ENCODE measurements at regions of chr9 and their contacts with region 1.

Region 1: GRCh38 chr9:131334629-131335367 is 45.3 kb downstream of the PLPP7 start:
- DNase-seq: no peak
- H3K4me3 ChIP-seq: no peak overlapping the region
- H3K27ac ChIP-seq: no peak overlapping the region
- H3K4me1 ChIP-seq: peaks cover 0 to 14% (median 8%) of the 10 kb centered on the region in 4 experiments
- H3K27me3 ChIP-seq: no peaks in the 10 kb centered on the region
- CTCF ChIP-seq: no peak
- EP300 ChIP-seq: no peak
- POLR2A ChIP-seq: no peak
- RAD21 ChIP-seq: no peak

Region 2: DNA sequence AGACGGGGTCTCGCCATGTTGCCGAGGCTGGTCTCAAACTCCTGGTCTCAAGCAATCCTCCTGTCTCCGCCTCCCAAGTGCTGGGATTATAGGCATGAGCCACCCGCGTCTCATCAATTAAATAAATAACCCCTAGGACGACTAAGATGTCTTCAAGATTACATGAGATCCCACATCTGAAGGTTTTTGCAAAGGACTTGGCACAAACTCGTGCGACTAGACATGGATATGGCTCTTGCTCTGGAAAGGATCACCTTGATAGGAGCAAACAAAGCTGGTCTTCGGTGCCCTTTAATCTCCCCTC is 210.0 kb before region 1 on chr9:
- CTCF ChIA-PET with region 1: no interaction called
- POLR2A ChIA-PET with region 1: no interaction called
- DNase-seq: no peak
- H3K4me3 ChIP-seq: peak overlapping the region; percentile 93 to 99 (median 96)
- H3K27ac ChIP-seq: peak overlapping the region; percentile 90
- H3K4me1 ChIP-seq: peaks cover 0 to 3% (median 0%) of the 10 kb centered on the region in 4 experiments; a peak in 1 of 7 replicates
- H3K27me3 ChIP-seq: no peaks in the 10 kb centered on the region
- CTCF ChIP-seq: no peak
- EP300 ChIP-seq: no peak
- POLR2A ChIP-seq: no peak
- RAD21 ChIP-seq: no peak

Region 3: DNA sequence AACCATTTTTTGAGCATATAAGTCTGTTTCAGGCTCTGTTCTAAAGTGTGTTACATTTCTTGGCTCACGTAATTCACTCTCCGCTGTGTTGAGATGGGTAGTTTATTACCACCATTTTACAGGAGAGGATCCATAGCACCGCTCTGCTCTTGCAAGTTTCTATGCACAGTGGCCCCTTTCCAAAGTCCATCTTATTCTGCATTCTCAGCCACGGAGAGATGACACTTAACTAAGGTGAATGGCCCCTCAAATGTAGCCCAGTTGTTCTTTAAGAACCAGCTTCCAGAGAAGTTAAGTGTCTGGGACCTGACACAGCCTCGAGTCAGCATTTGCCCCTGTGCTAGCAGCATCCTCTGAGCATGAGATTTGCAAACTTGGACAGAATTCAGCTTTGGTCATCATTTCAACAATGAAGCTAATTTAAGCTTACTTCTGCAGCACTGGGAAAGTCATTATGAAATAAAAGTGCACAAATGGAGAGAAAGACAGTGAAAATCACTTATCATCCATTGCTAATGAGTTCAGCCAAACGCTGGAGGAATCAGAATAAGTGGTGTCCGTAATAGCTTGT is 120.4 kb before region 1 on chr9:
- CTCF ChIA-PET with region 1: interaction called, 14 read pairs
- POLR2A ChIA-PET with region 1: interaction called, 3 read pairs
- DNase-seq: no peak
- H3K4me3 ChIP-seq: no peak overlapping the region
- H3K27ac ChIP-seq: no peak overlapping the region
- H3K4me1 ChIP-seq: peaks cover 0 to 2% (median 0%) of the 10 kb centered on the region in 4 experiments; a peak in 1 of 7 replicates
- H3K27me3 ChIP-seq: no peaks in the 10 kb centered on the region
- CTCF ChIP-seq: no peak
- EP300 ChIP-seq: no peak
- POLR2A ChIP-seq: no peak
- RAD21 ChIP-seq: no peak

Region 4: DNA sequence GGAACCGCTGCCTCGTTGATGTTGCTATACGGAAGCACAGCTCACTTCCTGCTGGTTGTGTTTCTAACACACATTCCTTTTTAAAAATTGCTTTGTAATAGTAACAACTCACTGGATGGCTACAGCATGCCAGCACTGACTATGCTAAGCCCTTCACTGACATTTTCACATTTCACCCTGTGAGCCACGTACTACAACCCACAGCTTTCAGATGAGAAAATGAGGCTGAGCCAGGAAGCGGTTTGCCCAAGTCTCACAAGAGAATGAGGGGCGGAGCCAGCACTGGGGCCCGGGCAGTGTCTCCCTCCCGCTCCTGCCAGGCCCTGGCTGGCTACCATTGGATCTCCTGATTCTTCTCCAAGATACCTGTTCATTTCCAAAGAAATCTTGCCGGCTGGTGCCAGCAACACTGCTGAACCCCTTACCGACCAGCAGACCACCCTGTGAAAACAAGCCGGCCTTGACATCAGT is 96.8 kb before region 1 on chr9:
- CTCF ChIA-PET with region 1: interaction called, 17 read pairs
- POLR2A ChIA-PET with region 1: no interaction called
- DNase-seq: peak in 1 of 2 experiments; percentile 79
- H3K4me3 ChIP-seq: no peak overlapping the region
- H3K27ac ChIP-seq: no peak overlapping the region
- H3K4me1 ChIP-seq: peaks cover 0 to 20% (median 16%) of the 10 kb centered on the region in 4 experiments; a peak in 6 of 7 replicates
- H3K27me3 ChIP-seq: no peaks in the 10 kb centered on the region
- CTCF ChIP-seq: no peak
- EP300 ChIP-seq: no peak
- POLR2A ChIP-seq: no peak
- RAD21 ChIP-seq: no peak

Region 5: GRCh38 chr9:131276094-131276888 is 58.5 kb before region 1 on chr9 and contains the start of gene FAM78A:
- CTCF ChIA-PET with region 1: interaction called, 10 read pairs
- POLR2A ChIA-PET with region 1: interaction called, 3 read pairs
- DNase-seq: no peak
- H3K4me3 ChIP-seq: peak within 1 kb of the TSS; percentile 42 to 72 (median 47)
- H3K27ac ChIP-seq: no peak within 1 kb of the TSS
- H3K4me1 ChIP-seq: peaks cover 0 to 15% (median 7%) of the 10 kb centered on the region in 4 experiments; a peak in 5 of 7 replicates
- H3K27me3 ChIP-seq: peaks cover 2 to 21% (median 13%) of the 10 kb centered on the region in 4 experiments; a peak in 6 of 7 replicates
- CTCF ChIP-seq: no peak
- EP300 ChIP-seq: no peak
- POLR2A ChIP-seq: no peak
- RAD21 ChIP-seq: no peak
- total RNA-seq, gene FAM78A: 3.1 and 3.5 TPM in 2 replicates

Region 6: DNA sequence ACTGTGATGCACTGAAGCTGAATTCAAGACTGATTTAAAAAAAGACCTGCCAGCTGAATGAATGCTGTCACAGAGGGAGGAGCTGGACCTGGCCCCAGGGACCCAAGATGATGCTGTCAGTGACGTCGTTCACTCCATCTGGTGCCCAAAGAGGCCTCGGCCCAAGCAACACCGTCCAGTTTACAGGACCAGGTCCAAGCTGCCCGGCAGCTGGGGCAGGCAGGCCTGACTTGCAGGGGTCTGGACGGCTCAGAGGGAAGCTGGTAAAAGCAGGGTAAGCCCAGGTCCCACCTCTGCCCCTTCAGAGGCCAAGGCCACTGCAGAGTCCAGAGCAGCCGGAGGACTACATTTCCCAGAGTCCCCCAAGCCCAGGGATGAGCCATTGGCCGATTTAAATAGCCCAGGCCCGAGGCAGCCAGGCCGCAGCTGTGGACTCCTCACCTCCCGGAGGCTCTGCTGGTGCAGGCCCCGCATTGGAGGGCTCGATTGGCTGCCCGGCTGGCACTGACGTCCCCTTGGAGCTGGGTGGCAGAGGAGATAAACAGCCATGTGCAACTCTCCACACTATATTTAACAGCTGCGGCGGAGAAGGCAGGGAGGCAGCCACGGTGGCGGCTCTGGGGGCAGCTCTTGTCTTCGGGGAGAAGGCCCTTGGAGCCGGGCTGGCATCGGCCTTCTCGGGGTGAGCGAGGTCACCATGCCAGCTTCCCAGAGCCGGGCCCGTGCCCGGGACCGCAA is 45.3 kb before region 1 on chr9 and contains the start of gene PLPP7:
- CTCF ChIA-PET with region 1: interaction called, 24 read pairs
- POLR2A ChIA-PET with region 1: interaction called, 3 read pairs
- DNase-seq: peak in 1 of 2 experiments; percentile 77
- H3K4me3 ChIP-seq: peak within 1 kb of the TSS in 1 of 4 experiments; percentile 16; a peak in 1 of 8 replicates
- H3K27ac ChIP-seq: no peak within 1 kb of the TSS
- H3K4me1 ChIP-seq: peaks cover 0 to 14% (median 8%) of the 10 kb centered on the region in 4 experiments; a peak in 6 of 7 replicates
- H3K27me3 ChIP-seq: no peaks in the 10 kb centered on the region
- CTCF ChIP-seq: no peak
- EP300 ChIP-seq: no peak
- POLR2A ChIP-seq: no peak
- RAD21 ChIP-seq: no peak
- total RNA-seq, gene PLPP7: 3.4 TPM in 2 replicates

Region 7: DNA sequence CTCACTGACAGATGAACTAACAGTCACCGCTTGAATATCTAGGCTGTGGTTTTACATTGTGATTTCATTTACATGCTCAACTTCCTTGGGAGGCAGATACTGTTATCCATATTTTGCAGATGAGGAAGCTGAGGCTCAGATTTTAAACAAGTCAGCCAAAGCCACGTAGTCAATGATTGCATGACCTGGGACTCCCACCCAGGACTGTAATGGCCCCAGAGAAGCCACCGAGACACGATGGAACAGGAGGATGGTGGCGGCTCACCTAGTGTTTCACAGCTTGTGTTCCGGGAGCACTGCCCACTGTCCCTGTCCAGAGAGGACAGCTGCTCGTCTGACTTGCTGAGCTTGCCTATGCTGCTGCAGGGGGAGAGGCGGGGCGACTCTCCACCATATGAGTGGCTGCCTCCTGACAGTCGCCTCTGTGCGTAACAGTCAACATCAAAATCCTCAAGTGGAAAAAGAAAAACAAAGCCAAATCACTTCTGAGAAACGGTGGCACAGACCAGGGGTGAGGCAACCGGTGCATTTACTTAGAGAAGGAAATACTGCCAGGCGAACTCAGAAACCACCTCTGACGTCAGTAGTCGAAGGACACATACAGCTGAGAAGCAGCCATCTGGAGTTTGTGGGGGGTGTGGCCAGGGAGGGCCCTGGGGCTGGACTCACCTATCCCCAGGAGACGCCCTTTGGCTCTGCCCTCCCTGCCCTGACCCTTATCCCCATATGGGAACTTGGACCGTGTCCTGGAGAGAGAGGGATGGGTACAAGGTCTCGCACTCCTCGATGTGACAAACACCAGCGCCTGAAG is 293.1 kb after region 1 on chr9:
- CTCF ChIA-PET with region 1: no interaction called
- POLR2A ChIA-PET with region 1: no interaction called
- DNase-seq: no peak
- H3K4me3 ChIP-seq: no peak overlapping the region
- H3K27ac ChIP-seq: no peak overlapping the region
- H3K4me1 ChIP-seq: peaks cover 0 to 10% (median 3%) of the 10 kb centered on the region in 4 experiments; a peak in 4 of 7 replicates
- H3K27me3 ChIP-seq: no peaks in the 10 kb centered on the region
- CTCF ChIP-seq: no peak
- EP300 ChIP-seq: no peak
- POLR2A ChIP-seq: no peak
- RAD21 ChIP-seq: no peak